ENCODE measurements at regions of chr1 and their contacts with region 1.

Region 1: DNA sequence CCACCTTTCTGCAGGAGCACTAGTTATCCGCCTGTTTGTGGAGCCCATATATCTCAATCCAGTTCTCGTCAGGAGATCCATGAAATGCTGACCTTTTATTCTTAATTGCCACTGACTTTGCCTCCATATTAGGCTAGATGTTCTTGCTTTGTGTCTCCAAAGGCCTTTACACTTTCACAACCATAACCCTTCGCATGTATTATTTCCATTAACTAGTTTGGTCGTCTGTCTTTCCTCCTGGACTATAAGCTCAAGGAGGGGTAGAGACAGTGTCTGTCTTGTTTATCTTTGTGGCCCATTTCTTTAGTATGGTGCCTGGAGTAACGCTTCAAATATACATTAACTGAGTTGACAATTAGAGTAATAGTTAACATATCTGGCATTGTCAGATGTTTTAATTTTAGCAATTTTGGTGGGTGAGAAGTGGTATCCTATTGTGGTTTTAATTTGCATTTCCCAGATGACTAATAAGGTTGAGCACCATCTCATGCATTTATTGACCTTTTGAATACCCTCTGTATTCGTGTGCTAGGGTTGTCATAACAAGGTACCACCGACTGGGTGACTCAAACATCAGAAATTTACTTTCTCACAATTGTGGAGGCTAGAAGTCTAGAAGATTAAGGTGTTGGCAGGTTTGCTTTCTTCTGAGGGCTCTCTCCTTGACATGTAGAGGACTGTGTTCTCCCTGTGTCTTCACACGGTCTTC is 21.7 kb upstream of the IL12RB2 start:
- DNase-seq: peak; percentile 10
- H3K4me3 Mint-ChIP-seq: no peak overlapping the region
- H3K27ac Mint-ChIP-seq: no peak overlapping the region
- H3K4me1 Mint-ChIP-seq: no peaks in the 10 kb centered on the region
- H3K27me3 Mint-ChIP-seq: peaks cover 11% of the 10 kb centered on the region
- CTCF ChIP-seq: no peak

Region 2: DNA sequence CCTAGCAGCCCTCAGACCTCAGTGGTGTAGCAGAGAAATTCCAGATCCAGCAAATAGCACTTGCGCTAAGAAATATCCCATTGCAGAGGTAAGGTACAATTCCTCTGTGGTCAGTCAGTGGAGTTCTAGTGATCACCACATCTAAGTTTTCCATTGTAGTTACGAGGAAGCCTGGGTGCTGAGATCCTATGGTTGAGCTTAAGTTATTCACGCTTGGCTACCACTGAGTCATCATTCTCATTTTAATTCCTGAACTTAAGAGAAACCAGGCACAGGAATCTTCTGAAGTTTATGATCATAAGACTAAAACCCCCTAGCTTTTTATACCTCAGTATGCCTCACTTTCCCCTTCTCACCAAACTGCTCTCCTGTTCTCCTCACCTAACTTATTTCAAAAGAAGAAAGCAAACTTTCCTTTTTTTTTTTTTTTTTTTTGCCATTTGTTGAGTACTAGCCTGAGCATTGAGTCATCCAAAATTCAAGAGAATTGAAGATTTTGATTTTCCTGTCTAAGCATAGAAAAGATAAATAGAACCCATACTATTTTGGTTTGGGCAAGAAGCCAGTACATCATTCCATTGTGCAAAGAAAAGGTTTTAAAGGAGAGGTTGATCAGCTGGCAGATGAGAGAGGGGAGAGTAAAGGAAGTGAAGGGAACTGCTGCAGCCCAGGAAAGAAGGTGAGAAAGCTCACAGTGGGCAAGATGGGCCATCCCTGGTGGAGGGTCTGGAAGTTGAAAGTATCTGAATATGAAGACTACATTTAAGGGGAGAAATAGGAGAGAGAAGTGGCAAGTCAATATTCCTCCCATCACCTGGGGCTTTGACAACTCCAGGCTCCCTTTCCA is 104.3 kb after region 1 on chr1:
- CTCF ChIA-PET with region 1: interaction called, 10 read pairs
- POLR2A ChIA-PET with region 1: no interaction called
- intact Hi-C with region 1: no loop called
- DNase-seq: no peak
- H3K4me3 Mint-ChIP-seq: no peak overlapping the region
- H3K27ac Mint-ChIP-seq: no peak overlapping the region
- H3K4me1 Mint-ChIP-seq: peaks cover 12% of the 10 kb centered on the region
- H3K27me3 Mint-ChIP-seq: no peaks in the 10 kb centered on the region
- CTCF ChIP-seq: no peak

Region 3: GRCh38 chr1:67515324-67516080 is 229.6 kb after region 1 on chr1:
- CTCF ChIA-PET with region 1: no interaction called
- POLR2A ChIA-PET with region 1: no interaction called
- intact Hi-C with region 1: no loop called
- DNase-seq: no peak
- H3K4me3 Mint-ChIP-seq: no peak overlapping the region
- H3K27ac Mint-ChIP-seq: no peak overlapping the region
- H3K4me1 Mint-ChIP-seq: no peaks in the 10 kb centered on the region
- H3K27me3 Mint-ChIP-seq: no peaks in the 10 kb centered on the region
- CTCF ChIP-seq: no peak